Activated naive CD4-positive, alpha-beta T cell treated with anti-CD3 and anti-CD28 coated beads for 36 hours (primary cell): ENCODE measurements at regions of chr12 and their contacts with region 1.

Region 1: DNA sequence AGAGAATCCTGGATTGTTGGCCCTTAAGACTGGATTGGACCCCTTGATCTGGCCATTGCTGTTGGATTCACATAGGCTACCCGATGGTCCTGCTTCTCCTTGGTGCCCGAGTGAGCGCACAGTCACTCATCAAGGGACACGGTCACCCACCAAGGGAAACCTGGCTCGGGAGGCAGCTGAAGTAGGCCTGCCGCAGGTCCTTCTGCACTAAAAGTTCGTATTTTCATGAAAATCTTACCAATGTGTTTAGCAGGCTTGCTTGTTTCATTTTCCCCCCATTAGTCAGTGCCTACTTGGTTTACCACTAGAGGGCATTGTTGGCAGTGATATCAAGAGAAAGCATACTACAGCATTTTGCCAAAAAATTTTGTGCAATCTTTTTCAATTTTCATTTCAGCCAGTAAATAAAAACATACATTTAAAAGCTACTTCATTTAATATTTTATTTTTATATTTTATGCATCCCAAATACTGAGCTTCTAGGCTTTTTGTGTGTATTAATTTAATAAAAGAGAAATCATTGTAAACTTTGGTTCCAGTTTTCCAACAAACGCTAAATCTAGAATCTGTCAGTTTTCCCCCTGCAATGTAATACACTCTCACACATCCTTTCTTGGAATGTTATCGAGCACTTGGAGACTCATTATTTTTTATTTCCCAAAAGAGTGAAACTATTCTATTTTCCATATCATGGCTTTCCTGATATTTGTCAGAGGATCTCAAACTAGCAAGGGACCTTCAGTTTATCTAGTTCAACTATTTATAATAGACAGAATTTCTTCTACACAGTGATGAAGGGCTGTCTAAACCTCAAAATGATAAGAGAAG is 116.7 kb downstream of the LMNTD1 start:
- DNase-seq: peak; percentile 37
- H3K4me3 Mint-ChIP-seq: no peak overlapping the region
- H3K27ac Mint-ChIP-seq: no peak overlapping the region
- H3K4me1 Mint-ChIP-seq: peaks cover 5% of the 10 kb centered on the region
- H3K27me3 Mint-ChIP-seq: no peaks in the 10 kb centered on the region

Region 2: DNA sequence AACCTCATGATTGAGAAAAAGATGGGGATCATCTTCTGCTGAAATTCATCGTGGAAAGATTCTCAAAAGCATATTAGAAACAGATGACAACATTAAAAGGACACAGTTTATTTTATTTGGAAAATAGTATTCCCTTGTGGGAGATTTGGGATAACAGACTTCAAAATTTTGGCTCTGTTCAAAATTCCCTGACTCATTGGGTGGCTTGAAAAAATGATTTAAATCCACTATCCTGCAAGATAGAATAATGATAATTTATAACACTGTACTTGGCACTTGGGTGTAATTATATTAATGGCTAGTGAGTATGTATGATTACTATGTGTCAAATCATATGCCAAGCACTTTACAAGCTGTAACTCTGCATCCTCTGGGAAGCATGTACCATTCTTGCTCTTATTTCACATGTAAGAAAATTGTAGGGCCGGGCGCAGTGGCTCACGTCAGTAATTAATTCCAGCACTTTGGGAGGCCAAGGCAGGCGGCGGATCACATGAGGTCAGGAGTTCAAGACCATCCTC is 12.1 kb before region 1 on chr12:
- CTCF ChIA-PET with region 1: interaction called, 10 read pairs
- intact Hi-C with region 1: no loop called
- DNase-seq: no peak
- H3K4me3 Mint-ChIP-seq: no peak overlapping the region
- H3K27ac Mint-ChIP-seq: no peak overlapping the region
- H3K4me1 Mint-ChIP-seq: no peaks in the 10 kb centered on the region
- H3K27me3 Mint-ChIP-seq: no peaks in the 10 kb centered on the region

Region 3: DNA sequence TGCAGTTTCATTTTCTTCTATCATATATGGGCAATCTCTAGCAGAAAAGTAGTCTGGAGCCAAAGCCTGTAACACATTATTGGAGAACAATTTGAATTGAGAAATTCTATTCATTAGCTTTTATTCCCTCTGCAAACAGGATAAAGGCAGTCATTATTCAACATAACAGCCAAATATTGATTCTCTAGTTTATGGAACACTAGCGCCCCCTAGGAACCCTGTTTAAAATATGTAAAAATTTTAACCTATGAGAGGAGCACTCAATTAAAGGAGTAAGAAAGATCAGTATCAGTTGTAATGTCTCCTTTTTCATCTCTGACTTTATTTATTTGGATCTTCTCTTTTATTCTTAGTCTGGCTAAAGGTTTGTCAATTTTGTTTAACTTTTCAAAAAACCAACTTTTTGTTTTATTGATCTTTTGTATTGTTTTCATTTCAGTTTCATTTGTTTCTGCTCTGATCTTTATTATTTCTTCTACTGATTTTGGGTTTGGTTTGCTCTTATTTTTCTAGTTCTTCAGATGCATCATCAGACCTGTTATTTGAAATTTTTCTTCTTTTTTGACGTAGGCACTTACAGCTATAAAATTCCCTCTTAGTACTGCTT is 121.5 kb after region 1 on chr12:
- CTCF ChIA-PET with region 1: no interaction called
- intact Hi-C with region 1: loop called (anchors 2 kb)
- DNase-seq: peak; percentile 33
- H3K4me3 Mint-ChIP-seq: no peak overlapping the region
- H3K27ac Mint-ChIP-seq: no peak overlapping the region
- H3K4me1 Mint-ChIP-seq: peaks cover 6% of the 10 kb centered on the region
- H3K27me3 Mint-ChIP-seq: no peaks in the 10 kb centered on the region

Region 4: DNA sequence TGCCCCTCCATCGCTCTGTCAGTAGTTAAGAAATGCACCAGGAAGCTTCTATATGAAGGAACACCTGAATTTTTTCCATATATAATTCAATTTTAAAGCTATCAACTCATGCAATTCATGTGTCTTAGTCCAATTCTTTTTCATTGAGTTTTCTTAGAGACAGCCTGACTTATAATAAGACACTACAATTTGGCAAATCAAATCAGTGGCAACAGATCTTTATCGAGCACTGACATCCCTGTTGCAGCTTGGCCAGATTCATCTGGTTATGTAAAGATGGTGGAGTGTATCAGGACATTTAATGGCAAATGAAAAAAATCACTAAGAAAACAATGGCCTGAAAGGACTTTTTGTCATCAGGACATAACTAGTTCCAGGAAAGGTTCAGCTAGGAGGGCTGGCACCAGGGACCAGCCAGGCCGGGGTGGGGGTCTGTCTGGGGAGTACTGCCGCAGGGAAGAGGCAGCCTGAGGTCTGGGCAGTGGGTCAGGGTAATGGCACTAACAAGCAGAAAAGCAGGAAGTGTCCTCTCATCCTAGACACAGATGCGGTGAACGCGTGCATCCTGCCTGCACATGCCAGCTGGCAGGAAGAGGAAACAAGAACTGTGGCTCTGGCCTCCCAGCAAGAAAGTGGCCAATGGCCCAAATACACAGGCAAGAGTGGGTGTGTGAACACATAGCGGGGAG is 217.2 kb after region 1 on chr12:
- CTCF ChIA-PET with region 1: no interaction called
- intact Hi-C with region 1: loop called (anchors 10 kb)
- DNase-seq: no peak
- H3K4me3 Mint-ChIP-seq: no peak overlapping the region
- H3K27ac Mint-ChIP-seq: no peak overlapping the region
- H3K4me1 Mint-ChIP-seq: peaks cover 6% of the 10 kb centered on the region
- H3K27me3 Mint-ChIP-seq: peaks cover 2% of the 10 kb centered on the region

Region 5: GRCh38 chr12:26017484-26018206 is 581.2 kb after region 1 on chr12:
- CTCF ChIA-PET with region 1: interaction called, 4 read pairs
- intact Hi-C with region 1: loop called (anchors 1 kb)
- DNase-seq: peak; percentile 18
- H3K4me3 Mint-ChIP-seq: no peak overlapping the region
- H3K27ac Mint-ChIP-seq: no peak overlapping the region
- H3K4me1 Mint-ChIP-seq: no peaks in the 10 kb centered on the region
- H3K27me3 Mint-ChIP-seq: no peaks in the 10 kb centered on the region

Region 6: GRCh38 chr12:26028953-26029735 is 592.7 kb after region 1 on chr12:
- CTCF ChIA-PET with region 1: interaction called, 7 read pairs
- intact Hi-C with region 1: loop called (anchors 1 kb)
- DNase-seq: peak; percentile 50
- H3K4me3 Mint-ChIP-seq: no peak overlapping the region
- H3K27ac Mint-ChIP-seq: no peak overlapping the region
- H3K4me1 Mint-ChIP-seq: no peaks in the 10 kb centered on the region
- H3K27me3 Mint-ChIP-seq: no peaks in the 10 kb centered on the region

Region 7: DNA sequence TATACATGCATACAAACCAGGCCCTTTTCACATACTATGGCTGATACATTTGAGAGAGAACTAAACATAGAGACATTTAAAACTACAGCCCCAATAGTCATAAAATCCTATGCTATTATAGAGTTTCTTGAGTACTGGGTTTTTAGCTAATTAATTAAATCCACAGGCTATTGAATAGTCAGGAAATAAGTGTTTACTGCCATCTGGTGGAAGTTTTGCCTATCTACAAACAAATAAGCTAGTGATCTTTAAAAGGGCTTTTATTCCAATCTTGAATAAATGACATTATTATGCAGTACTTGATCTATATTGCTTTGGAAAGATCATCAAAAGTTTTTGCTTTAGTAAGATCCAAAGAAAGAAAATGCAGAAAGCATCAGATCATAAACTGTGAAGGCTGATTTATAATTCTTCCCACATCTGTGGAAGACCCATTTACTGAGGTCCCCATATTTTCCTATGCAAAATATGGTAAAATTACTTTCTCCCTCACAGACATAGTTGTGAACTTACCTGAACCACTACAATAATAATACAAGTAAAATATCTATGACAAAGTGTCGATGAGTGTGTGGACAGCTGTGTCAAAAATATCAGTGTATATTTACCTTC is 1265.3 kb after region 1 on chr12:
- CTCF ChIA-PET with region 1: no interaction called
- intact Hi-C with region 1: loop called (anchors 5 kb)
- DNase-seq: no peak
- H3K4me3 Mint-ChIP-seq: no peak overlapping the region
- H3K27ac Mint-ChIP-seq: no peak overlapping the region
- H3K4me1 Mint-ChIP-seq: no peaks in the 10 kb centered on the region
- H3K27me3 Mint-ChIP-seq: no peaks in the 10 kb centered on the region